Gastrocnemius medialis (tissue), 4 donors: ENCODE measurements at regions of chr11 and their contacts with region 1.

Region 1: DNA sequence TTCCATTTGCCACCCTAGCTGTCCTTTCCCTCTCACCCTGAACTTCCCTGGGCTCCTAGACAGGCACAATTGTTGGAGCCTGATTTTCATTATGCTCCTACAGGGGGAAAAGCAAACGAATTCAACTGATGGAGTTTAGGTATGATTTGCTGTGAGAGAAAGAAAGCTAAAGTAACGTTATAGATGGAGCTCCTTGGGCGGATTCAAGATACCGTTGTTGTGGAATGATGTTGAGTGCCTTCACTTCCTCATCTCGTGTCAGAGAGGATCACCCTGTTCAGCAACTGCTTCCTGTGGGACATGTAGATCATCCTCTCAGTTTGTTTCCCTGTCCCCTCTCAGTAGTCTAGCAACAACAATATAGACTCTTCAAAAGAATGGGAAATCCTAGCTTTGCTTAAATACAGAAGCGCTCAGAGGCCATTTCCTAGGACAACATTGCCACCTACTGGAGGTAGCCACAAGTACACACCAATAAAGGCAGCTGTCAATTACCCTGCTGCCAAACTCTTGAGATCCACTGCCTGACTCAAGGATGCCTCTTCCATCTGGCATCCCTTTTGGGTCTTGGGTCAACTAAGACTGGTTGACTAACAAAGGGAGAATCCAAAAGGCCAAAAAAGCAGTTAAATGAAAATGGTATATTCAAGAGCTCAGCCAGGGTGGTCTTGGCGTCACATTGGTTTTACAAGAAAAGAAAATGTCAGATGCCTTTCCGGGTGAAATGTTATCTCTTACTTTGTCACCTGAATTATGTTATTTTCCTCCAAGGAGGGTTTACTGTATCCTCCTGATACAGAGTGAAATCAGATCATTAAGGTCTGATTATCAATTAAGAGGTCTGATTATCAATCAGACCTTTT is 13.5 kb upstream of the DTX4 start:
- DNase-seq: peak; percentile 18 to 20
- ATAC-seq: peak; percentile 73 to 85
- H3K4me3 ChIP-seq: no peak overlapping the region
- H3K27ac ChIP-seq: no peak overlapping the region
- H3K4me1 ChIP-seq: no peaks in the 10 kb centered on the region
- H3K27me3 ChIP-seq: peaks cover 0 to 2% (median 0%) of the 10 kb centered on the region in 3 donors
- CTCF ChIP-seq: peak; percentile 51 to 73 (median 62)
- POLR2A ChIP-seq: no peak

Region 2: GRCh38 chr11:58654079-58654907 is 504.1 kb before region 1 on chr11:
- in situ Hi-C with region 1: loop called in 1 of 4 experiments (anchors 25 kb)
- intact Hi-C with region 1: loop called (anchors 10 kb)
- DNase-seq: peak; percentile 12 to 56
- ATAC-seq: peak; percentile 61 to 63
- H3K4me3 ChIP-seq: no peak overlapping the region
- H3K27ac ChIP-seq: no peak overlapping the region
- H3K4me1 ChIP-seq: no peaks in the 10 kb centered on the region
- H3K27me3 ChIP-seq: no peaks in the 10 kb centered on the region
- CTCF ChIP-seq: peak; percentile 52 to 82 (median 65)
- POLR2A ChIP-seq: no peak

Region 3: GRCh38 chr11:59097113-59097708 is 61.2 kb before region 1 on chr11:
- in situ Hi-C with region 1: loop called in 2 of 4 experiments (anchors 10 kb)
- intact Hi-C with region 1: no loop called
- DNase-seq: no peak
- ATAC-seq: no peak
- H3K4me3 ChIP-seq: no peak overlapping the region
- H3K27ac ChIP-seq: no peak overlapping the region
- H3K4me1 ChIP-seq: no peaks in the 10 kb centered on the region
- H3K27me3 ChIP-seq: peaks cover under 1 to 10% (median 4%) of the 10 kb centered on the region in 3 donors
- CTCF ChIP-seq: peak in 4 of 5 experiments; percentile 9 to 51 (median 41)
- POLR2A ChIP-seq: no peak

Region 4: DNA sequence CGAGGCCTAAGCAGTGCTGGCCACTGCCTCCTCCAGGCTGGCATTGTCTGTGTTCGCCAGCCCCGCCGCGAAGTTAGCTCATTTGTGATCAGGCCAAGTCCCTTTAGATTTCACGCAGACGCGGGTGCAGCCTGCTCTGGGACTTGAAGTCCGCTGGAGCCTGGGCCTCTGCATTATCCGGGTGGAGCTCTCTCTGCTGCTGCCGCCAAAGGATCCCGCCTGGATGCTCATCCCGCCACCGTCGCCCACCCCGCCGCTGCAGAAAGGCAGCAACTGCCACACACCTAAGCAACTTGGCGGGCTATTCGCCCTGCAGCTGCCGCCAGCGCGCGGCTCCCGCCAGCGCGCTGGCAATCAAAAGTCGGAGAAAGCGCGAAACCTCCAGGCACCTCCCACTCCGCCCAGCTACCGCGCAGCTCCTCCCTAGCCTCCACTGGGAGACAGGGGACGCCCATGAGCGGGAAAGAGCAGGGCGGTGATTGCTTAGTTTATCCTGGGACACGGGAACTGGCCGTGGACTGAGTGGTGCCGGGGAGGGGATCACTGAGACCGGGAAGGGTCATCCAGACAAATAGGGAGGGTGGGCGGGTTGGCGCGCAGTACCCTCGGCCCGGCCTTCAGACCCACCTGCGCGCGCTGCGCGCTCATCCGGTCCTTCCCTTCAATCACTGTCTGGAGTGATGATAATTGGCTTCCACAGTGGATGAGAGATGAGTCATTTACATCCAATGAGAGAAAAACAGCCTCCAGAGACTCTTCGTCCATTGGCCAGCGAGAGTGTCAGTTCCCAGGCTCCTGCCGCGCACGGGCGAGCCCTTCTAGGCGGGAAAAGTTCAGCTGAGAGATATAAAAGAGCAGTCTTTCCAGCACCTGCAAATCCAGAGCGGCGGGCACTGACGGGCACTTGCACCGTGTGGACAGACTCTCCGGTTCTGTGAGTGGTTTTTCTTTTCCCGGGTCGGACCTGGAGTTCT is 51.8 kb before region 1 on chr11 and contains the start of gene FAM111B:
- in situ Hi-C with region 1: loop called in 1 of 4 experiments (anchors 10 kb)
- intact Hi-C with region 1: no loop called
- DNase-seq: peak; percentile 58
- ATAC-seq: peak; percentile 92 to 99
- H3K4me3 ChIP-seq: peak within 1 kb of the TSS; percentile 40 to 57 (median 56)
- H3K27ac ChIP-seq: no peak within 1 kb of the TSS
- H3K4me1 ChIP-seq: peaks cover 0 to 6% of the 10 kb centered on the region in 2 donors
- H3K27me3 ChIP-seq: peaks cover 8 to 31% (median 27%) of the 10 kb centered on the region in 3 donors
- CTCF ChIP-seq: no peak
- POLR2A ChIP-seq: no peak
- total RNA-seq, gene FAM111B: 0.31 TPM in 1 of 4 donors, not detected in the others

Region 5: GRCh38 chr11:59259867-59260475 is 101.5 kb after region 1 on chr11:
- in situ Hi-C with region 1: no loop called
- intact Hi-C with region 1: no loop called
- DNase-seq: no peak
- ATAC-seq: no peak
- H3K4me3 ChIP-seq: no peak overlapping the region
- H3K27ac ChIP-seq: no peak overlapping the region
- H3K4me1 ChIP-seq: no peaks in the 10 kb centered on the region
- H3K27me3 ChIP-seq: no peaks in the 10 kb centered on the region
- CTCF ChIP-seq: no peak
- POLR2A ChIP-seq: no peak